ENCODE measurements at regions of chr22 and their contacts with region 1.

Region 1: DNA sequence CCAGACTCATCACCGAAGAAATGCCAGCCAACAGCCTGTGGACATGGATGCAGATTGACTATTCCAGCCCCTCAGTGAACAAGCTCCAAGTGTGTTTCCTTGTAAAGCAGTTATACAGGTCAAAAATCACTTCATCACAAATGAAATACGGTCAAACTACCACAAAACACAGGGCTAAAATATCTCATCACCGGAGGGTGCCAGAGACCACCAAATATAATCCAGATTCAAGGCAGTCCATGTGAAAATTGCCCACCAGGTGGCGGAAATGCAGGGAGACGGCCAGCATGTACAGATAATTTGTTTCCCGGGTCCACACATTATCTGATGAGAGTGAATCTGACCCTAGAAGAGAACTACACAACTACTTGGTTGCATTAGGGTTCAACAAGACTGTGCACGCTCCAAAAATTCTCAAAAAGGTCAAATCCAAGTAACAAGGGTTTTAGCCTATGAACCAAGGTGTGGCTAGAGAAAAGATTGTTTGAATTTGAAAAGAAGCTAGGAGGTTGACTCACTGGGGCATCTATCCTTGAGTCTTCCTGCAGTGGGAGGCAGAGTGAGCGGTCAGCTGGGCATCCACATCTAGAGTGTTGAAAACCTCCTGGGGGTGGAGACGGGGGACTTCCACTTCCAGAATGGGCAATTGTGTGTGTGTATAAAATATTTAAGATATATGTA is 71.7 kb downstream of the IGLL5 start:
- DNase-seq: peak; percentile 74 to 85 (median 77)
- ATAC-seq: peak; percentile 55 to 58
- H3K4me3 ChIP-seq: no peak overlapping the region
- H3K27ac ChIP-seq: no peak overlapping the region
- H3K4me1 ChIP-seq: no peaks in the 10 kb centered on the region
- H3K27me3 ChIP-seq: no peaks in the 10 kb centered on the region

Region 2: DNA sequence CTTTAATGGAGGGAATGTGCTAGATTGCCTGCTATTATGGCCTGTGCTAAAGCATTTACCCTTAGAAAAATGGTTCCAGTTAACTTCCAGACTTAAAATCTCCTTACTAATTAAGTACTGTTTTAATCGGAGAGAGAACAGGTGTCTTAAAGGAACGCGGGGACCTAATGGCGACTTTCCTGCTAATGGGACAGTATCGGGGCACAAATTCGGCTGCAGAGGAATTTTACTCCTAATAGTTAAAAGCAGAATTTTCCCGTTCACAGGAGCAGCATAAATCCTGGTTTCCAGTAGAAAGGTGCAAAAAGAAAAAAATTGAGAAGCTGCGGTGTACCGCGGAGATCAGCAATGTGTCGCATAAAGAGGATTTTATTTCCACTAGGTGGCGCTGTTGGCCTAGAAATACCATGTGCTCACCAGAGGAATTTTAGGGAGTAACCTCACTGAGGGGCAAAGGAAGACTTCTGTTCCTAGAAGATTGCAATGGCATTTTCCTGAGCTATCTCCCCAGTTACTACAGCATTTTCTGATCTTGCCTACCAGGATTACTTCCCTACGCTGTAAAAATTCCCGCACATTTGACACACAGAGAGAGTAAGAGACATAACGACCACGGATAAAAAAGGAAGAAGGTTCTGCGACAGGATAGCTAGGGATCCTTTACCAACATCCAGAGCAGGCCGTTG is 495.3 kb before region 1 on chr22:
- intact Hi-C with region 1: loop called in 3 of 4 experiments (anchors 5 to 10 kb)
- DNase-seq: no peak
- ATAC-seq: peak; percentile 36 to 59
- H3K4me3 ChIP-seq: no peak overlapping the region
- H3K27ac ChIP-seq: no peak overlapping the region
- H3K4me1 ChIP-seq: no peaks in the 10 kb centered on the region
- H3K27me3 ChIP-seq: no peaks in the 10 kb centered on the region

Region 3: DNA sequence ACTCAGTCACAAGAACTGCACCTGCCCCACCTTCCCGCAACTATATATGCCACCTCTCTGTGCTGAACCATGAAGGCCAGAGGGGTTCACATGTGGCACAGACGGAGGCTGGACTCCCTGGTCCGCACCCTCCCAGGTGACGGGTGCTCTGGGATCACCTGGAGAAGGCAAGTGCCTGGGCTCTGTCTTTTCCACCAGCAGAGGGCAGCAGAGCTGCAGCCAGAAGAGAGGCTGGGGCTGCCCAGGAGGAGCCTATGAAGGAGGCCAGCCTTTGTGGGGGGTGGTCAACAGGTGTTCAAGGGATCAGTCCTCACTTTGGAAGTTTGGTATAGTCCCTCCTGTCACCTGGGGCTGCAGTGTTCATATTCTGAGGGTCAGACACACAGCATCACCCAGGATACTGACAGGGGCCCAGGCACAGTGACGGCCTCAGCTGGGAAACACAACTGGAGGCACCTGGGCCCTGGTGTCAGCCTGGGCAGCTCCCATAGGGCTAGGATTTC is 110.9 kb before region 1 on chr22:
- intact Hi-C with region 1: loop called in 2 of 4 experiments (anchors 2 to 5 kb)
- DNase-seq: peak; percentile 53 to 82 (median 77)
- ATAC-seq: peak; percentile 77 to 78
- H3K4me3 ChIP-seq: no peak overlapping the region
- H3K27ac ChIP-seq: no peak overlapping the region
- H3K4me1 ChIP-seq: no peaks in the 10 kb centered on the region
- H3K27me3 ChIP-seq: no peaks in the 10 kb centered on the region

Region 4: GRCh38 chr22:23036684-23037428 is 77.6 kb after region 1 on chr22:
- intact Hi-C with region 1: no loop called
- DNase-seq: no peak
- ATAC-seq: no peak
- H3K4me3 ChIP-seq: no peak overlapping the region
- H3K27ac ChIP-seq: no peak overlapping the region
- H3K4me1 ChIP-seq: no peaks in the 10 kb centered on the region
- H3K27me3 ChIP-seq: no peaks in the 10 kb centered on the region

Region 5: DNA sequence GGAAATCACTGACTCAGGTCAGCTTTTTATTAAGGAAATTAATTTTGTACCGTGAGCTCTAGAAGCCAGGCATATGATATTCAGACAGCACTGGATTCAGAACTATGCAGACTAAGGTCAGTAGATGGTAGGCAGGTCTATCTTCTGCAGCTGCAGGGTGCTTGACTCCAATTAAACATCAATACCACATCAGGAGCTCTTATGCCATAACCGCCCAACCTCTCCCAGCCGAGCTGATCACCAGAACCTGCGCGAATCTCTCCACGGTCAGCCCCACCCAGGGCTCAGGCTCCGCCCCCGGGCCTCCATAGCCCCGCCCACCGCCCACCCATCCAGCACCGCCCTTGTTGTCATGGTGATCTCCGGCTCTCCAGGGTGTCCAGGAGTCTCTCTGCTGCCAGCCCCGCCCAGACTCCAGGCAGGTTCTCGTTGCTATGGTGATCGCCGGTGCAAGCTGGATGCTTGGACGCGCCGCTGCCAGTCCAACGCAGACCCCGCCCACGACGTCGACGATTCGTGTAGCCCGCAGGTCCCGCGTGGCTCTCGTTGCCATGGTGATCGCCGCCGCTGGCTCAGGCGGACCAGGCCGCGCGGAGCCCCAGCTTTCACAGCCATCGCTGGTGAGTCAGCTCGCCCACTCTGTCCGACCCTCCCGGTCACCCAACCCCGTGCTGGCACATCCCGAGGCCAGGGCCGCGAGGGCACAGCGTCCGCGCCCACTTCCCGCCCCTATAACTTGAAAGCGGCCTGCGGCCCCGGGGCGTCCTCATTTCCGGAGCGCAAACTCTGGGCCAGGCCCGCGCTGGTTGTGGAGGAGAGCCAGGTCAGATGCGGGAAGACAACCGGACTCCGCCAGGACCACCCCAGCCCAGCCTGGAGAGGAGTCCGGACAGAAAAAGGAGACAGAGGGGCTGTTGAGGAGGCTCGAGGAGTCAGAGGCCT is 185.9 kb after region 1 on chr22 and contains the start of gene RAB36:
- intact Hi-C with region 1: no loop called
- DNase-seq: peak; percentile 99
- ATAC-seq: peak; percentile 88 to 89
- H3K4me3 ChIP-seq: peak within 1 kb of the TSS; percentile 8
- H3K27ac ChIP-seq: peak within 1 kb of the TSS; percentile 16
- H3K4me1 ChIP-seq: no peaks in the 10 kb centered on the region
- H3K27me3 ChIP-seq: no peaks in the 10 kb centered on the region
- total RNA-seq, gene RAB36: 1.1 to 2.7 (median 1.6) TPM

Region 6: DNA sequence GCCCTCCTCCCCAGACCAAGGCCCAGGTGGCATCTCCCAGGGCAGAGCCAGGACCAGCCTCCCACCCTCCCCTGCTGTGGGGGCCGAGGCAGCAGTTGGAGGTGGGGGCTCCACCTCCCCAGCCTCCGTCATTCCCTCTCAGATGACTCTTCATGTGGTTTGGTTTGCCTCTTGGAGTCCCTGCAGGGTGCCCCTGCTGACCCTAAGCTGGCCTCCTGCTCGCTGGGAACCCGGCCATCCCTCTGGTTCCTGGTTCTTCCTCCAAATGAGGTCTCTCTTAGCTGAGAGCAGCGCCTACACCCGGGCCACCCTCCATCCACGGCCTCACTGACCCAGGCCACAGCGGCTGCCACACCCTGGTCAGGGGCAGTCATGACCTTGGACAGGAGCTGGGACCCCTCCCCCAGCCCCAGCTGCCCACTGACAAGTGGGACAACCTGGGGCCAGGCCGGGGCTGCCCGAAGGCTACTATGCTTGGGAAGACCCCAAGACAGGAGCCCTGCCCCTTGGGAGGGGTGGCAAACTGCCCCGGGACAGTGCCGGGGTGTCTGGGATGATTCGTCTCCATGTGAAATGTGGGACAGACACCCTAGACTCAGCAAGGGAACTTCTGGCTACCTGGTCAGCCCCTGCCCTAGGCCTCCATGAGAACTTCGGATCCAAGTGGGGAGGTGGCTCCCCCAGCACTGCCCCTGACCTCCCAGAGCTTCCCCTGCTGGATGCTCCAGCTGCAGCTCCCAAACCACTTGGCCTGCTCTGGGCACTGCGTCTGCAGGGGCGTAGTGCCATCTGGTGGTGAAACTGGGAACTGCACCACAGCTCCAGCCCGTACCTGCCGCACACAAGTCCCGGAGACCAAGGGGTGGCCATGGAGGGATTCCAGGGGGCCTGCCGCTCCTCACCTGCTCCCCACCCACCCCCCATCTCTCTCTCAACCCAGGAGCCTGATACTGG is 426.3 kb after region 1 on chr22:
- intact Hi-C with region 1: loop called in 2 of 4 experiments (anchors 5 to 10 kb)
- DNase-seq: peak; percentile 79 to 93 (median 92)
- ATAC-seq: peak; percentile 77 to 82
- H3K4me3 ChIP-seq: no peak overlapping the region
- H3K27ac ChIP-seq: no peak overlapping the region
- H3K4me1 ChIP-seq: no peaks in the 10 kb centered on the region
- H3K27me3 ChIP-seq: no peaks in the 10 kb centered on the region

Measured in right cardiac atrium (tissue), 5 donors.